Caco-2 (cell line): ENCODE measurements at regions of chr11 and their contacts with region 1.

Region 1: DNA sequence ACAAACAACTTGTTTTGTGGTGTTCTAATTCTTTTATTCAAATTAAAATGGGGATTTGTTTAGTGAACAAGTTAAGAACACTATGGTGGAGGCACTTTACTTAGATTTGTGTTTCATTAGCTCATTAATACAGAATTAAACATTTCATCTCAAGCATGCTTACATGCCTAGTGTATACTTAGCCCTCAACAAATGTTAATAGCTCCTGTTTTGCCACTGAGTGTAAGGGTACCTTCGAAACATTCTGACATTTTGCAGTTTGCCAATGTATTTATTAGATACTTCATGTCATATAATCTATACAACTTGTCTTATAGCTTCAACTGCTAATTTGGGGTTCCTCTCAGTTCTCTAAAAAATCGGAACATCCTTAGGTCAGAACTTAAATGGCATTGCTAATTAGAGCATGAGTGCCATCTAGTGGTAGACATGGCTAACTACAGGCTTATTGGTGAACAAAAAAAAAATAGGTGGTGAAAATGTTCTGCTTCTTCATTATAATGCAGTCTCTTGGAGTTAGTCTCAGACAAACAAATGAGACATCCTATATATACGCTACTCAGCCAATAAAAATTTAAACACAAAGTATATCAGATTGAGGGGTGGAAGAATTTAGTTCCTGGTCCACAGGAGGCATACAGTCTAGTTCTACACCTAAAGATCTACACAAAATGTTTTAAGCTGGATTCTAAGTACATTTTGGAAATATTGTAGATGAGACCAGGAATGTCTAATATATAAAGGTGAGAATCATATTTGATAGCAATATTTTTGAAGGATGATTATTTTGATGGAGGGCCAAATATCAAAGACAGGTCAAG is 4.9 kb upstream of the CNTN5 start:
- DNase-seq: peak in 1 of 2 experiments; percentile 55
- H3K4me3 ChIP-seq: no peak overlapping the region
- H3K4me3 Mint-ChIP-seq: no peak overlapping the region
- H3K27ac Mint-ChIP-seq: no peak overlapping the region
- H3K4me1 ChIP-seq: no peaks in the 10 kb centered on the region
- H3K4me1 Mint-ChIP-seq: no peaks in the 10 kb centered on the region
- H3K27me3 ChIP-seq: no peaks in the 10 kb centered on the region
- H3K27me3 Mint-ChIP-seq: peaks cover 11% of the 10 kb centered on the region
- CTCF ChIP-seq: peak; percentile 92 to 93

Region 2: GRCh38 chr11:97269527-97269926 is 1746.3 kb before region 1 on chr11:
- CTCF ChIA-PET with region 1: no interaction called
- POLR2A ChIA-PET with region 1: no interaction called
- intact Hi-C with region 1: loop called (anchors 10 kb)
- DNase-seq: peak in 1 of 2 experiments; percentile 59
- H3K4me3 ChIP-seq: no peak overlapping the region
- H3K4me3 Mint-ChIP-seq: no peak overlapping the region
- H3K27ac Mint-ChIP-seq: no peak overlapping the region
- H3K4me1 ChIP-seq: no peaks in the 10 kb centered on the region
- H3K4me1 Mint-ChIP-seq: no peaks in the 10 kb centered on the region
- H3K27me3 ChIP-seq: no peaks in the 10 kb centered on the region
- H3K27me3 Mint-ChIP-seq: peaks cover 2% of the 10 kb centered on the region
- CTCF ChIP-seq: peak; percentile 63 to 67

Region 3: DNA sequence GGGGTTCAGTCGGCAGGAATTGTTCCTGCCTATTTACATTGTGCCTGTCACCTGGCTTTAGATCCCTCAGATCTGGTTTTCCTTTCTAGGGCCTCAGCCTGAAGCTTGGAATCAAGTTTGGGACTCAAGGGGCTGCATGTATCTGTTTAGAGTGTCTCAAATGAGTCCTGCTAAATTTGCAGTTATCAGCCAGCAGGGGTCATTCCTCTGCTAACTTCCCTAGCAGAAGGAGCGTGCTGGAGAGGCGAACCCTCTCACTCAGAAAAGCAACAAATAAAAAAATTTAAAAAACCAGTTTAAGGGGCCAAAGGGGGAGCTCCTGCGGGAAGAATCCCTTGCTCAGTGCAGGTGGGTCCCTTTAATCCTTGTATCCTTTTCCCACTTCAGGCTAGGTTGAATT is 1405.8 kb before region 1 on chr11:
- CTCF ChIA-PET with region 1: no interaction called
- POLR2A ChIA-PET with region 1: no interaction called
- intact Hi-C with region 1: loop called (anchors 1 kb)
- DNase-seq: peak in 1 of 2 experiments; percentile 20
- H3K4me3 ChIP-seq: no peak overlapping the region
- H3K4me3 Mint-ChIP-seq: no peak overlapping the region
- H3K27ac Mint-ChIP-seq: no peak overlapping the region
- H3K4me1 ChIP-seq: no peaks in the 10 kb centered on the region
- H3K4me1 Mint-ChIP-seq: no peaks in the 10 kb centered on the region
- H3K27me3 ChIP-seq: no peaks in the 10 kb centered on the region
- H3K27me3 Mint-ChIP-seq: no peaks in the 10 kb centered on the region
- CTCF ChIP-seq: peak in 1 of 2 experiments; percentile 21

Region 4: DNA sequence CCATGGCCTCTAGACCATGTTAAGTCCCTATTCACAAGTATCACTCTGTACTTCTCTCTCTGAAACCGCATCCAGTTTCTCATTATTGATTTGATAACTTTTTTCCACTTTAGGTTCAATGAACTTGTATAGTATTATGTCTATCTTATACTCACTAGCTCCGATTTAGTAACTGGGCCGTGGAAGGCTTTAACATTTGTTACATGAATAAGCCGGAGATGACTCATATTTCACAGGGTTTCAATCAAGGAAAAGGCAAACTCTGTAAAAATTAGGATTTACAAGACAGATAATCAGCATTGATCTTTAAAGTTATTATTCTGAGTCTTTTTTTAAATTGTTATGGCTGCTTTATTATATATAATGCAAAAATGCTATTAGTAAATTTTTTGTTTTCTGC is 657.3 kb before region 1 on chr11:
- CTCF ChIA-PET with region 1: no interaction called
- POLR2A ChIA-PET with region 1: no interaction called
- intact Hi-C with region 1: loop called (anchors 10 kb)
- DNase-seq: no peak
- H3K4me3 ChIP-seq: no peak overlapping the region
- H3K4me3 Mint-ChIP-seq: no peak overlapping the region
- H3K27ac Mint-ChIP-seq: no peak overlapping the region
- H3K4me1 ChIP-seq: no peaks in the 10 kb centered on the region
- H3K4me1 Mint-ChIP-seq: no peaks in the 10 kb centered on the region
- H3K27me3 ChIP-seq: no peaks in the 10 kb centered on the region
- H3K27me3 Mint-ChIP-seq: no peaks in the 10 kb centered on the region
- CTCF ChIP-seq: no peak

Region 5: DNA sequence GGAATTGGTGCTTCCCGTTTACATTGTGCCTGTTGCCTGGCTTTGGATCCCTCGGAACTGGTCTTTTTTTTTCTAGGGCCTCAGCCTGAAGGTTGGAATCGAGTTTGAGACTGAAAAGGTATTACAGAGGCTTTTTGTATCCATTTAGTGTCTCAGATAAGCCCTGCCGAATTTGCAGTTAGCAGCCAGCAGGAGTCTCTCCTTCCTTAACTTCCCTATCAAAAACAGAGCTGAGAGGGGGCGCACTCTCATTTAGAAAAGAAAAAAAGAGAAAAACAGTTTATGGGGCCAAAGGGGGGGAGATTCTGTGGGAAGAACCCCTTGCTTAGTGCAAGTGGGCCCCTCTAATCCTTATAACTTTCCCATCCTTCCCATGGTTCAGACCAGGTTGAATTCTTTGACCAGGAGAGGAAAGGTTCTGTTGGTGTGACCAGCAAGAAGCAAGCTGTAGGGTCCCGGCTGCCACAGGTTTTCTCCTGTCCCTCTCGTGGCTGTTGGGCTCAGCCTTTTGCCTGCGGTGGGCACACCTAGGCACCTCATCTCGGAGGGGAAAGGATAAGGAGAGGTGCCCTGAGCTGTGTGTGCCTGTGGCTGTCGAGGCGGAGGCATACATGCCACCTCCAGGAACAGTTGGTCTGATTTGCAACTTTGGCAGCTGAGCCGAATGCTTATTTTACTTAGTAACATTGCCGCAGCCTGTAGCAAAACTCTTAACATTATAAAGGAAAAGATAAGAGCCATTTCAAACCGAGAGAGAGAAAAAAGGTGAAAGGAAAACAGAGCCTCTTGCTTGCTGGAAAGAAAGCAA is 560.1 kb before region 1 on chr11:
- CTCF ChIA-PET with region 1: interaction called, 11 read pairs
- POLR2A ChIA-PET with region 1: no interaction called
- intact Hi-C with region 1: loop called (anchors 1 kb)
- DNase-seq: peak in 1 of 2 experiments; percentile 31
- H3K4me3 ChIP-seq: no peak overlapping the region
- H3K4me3 Mint-ChIP-seq: no peak overlapping the region
- H3K27ac Mint-ChIP-seq: no peak overlapping the region
- H3K4me1 ChIP-seq: no peaks in the 10 kb centered on the region
- H3K4me1 Mint-ChIP-seq: no peaks in the 10 kb centered on the region
- H3K27me3 ChIP-seq: no peaks in the 10 kb centered on the region
- H3K27me3 Mint-ChIP-seq: peaks cover 5% of the 10 kb centered on the region
- CTCF ChIP-seq: peak; percentile 52 to 63

Region 6: DNA sequence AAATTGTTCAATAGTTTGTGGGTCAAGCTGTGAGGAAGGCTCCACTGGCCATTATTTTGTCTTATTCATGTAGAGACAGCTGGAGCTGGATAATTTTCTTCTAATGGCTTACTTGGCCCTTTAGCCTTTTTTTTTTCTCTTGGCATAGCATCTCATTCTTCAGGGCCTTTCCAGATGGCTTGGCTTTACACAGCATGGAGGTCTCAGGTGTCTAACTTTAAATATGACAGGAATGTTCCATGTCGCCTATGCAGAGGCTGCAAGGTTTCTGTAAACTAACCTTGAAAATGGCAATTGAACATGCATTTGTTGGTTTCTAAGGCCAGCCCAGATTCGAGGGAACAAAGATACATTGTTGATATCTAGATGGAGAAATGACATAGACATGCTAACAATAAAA is 243.0 kb before region 1 on chr11:
- CTCF ChIA-PET with region 1: no interaction called
- POLR2A ChIA-PET with region 1: no interaction called
- intact Hi-C with region 1: no loop called
- DNase-seq: no peak
- H3K4me3 ChIP-seq: no peak overlapping the region
- H3K4me3 Mint-ChIP-seq: no peak overlapping the region
- H3K27ac Mint-ChIP-seq: no peak overlapping the region
- H3K4me1 ChIP-seq: no peaks in the 10 kb centered on the region
- H3K4me1 Mint-ChIP-seq: no peaks in the 10 kb centered on the region
- H3K27me3 ChIP-seq: no peaks in the 10 kb centered on the region
- H3K27me3 Mint-ChIP-seq: no peaks in the 10 kb centered on the region
- CTCF ChIP-seq: no peak

Region 7: DNA sequence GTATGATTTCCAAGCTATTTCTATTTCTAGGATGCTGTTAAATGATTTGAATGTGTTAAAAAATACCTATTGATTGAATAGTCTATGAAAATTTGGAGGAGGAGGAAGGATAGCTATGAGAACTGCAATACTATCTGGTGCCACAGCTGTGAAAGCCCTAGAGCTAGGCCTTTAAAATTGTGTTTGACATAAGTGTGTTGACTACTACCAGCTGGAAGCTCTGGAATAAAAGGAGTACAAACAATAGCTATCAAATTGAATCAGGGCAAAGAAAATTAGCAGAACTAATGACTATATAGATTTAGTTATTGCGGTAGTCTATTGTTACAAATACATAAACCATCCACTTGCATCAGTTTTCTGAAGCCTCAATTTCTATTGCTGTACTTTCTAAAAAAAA is 119.9 kb before region 1 on chr11:
- CTCF ChIA-PET with region 1: no interaction called
- POLR2A ChIA-PET with region 1: no interaction called
- intact Hi-C with region 1: no loop called
- DNase-seq: no peak
- H3K4me3 ChIP-seq: no peak overlapping the region
- H3K4me3 Mint-ChIP-seq: no peak overlapping the region
- H3K27ac Mint-ChIP-seq: no peak overlapping the region
- H3K4me1 ChIP-seq: no peaks in the 10 kb centered on the region
- H3K4me1 Mint-ChIP-seq: no peaks in the 10 kb centered on the region
- H3K27me3 ChIP-seq: no peaks in the 10 kb centered on the region
- H3K27me3 Mint-ChIP-seq: no peaks in the 10 kb centered on the region
- CTCF ChIP-seq: no peak

Region 8: DNA sequence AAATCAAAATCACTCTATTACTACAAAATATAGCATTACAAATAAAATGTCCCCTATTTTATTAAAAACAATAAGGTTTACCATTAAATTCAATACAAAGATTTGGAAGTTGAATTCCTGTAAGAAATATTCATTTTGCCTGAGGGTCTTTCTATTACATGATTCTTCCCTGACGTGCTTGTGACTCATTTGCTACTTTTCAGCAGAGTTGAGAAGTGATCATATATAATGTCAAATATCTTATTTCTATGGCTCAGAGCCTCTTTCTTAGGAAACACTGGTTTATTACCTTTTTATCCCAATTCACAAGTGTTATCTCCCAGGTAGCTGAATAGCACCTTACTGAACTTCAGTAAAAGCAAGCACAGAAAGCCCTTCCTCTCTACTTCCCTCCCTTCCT is 60.3 kb before region 1 on chr11:
- CTCF ChIA-PET with region 1: interaction called, 11 read pairs
- POLR2A ChIA-PET with region 1: no interaction called
- intact Hi-C with region 1: no loop called
- DNase-seq: no peak
- H3K4me3 ChIP-seq: no peak overlapping the region
- H3K4me3 Mint-ChIP-seq: no peak overlapping the region
- H3K27ac Mint-ChIP-seq: no peak overlapping the region
- H3K4me1 ChIP-seq: no peaks in the 10 kb centered on the region
- H3K4me1 Mint-ChIP-seq: no peaks in the 10 kb centered on the region
- H3K27me3 ChIP-seq: no peaks in the 10 kb centered on the region
- H3K27me3 Mint-ChIP-seq: no peaks in the 10 kb centered on the region
- CTCF ChIP-seq: no peak

Region 9: GRCh38 chr11:98967005-98967404 is 48.8 kb before region 1 on chr11:
- CTCF ChIA-PET with region 1: no interaction called
- POLR2A ChIA-PET with region 1: no interaction called
- intact Hi-C with region 1: no loop called
- DNase-seq: no peak
- H3K4me3 ChIP-seq: no peak overlapping the region
- H3K4me3 Mint-ChIP-seq: no peak overlapping the region
- H3K27ac Mint-ChIP-seq: no peak overlapping the region
- H3K4me1 ChIP-seq: no peaks in the 10 kb centered on the region
- H3K4me1 Mint-ChIP-seq: no peaks in the 10 kb centered on the region
- H3K27me3 ChIP-seq: no peaks in the 10 kb centered on the region
- H3K27me3 Mint-ChIP-seq: no peaks in the 10 kb centered on the region
- CTCF ChIP-seq: no peak

Region 10: DNA sequence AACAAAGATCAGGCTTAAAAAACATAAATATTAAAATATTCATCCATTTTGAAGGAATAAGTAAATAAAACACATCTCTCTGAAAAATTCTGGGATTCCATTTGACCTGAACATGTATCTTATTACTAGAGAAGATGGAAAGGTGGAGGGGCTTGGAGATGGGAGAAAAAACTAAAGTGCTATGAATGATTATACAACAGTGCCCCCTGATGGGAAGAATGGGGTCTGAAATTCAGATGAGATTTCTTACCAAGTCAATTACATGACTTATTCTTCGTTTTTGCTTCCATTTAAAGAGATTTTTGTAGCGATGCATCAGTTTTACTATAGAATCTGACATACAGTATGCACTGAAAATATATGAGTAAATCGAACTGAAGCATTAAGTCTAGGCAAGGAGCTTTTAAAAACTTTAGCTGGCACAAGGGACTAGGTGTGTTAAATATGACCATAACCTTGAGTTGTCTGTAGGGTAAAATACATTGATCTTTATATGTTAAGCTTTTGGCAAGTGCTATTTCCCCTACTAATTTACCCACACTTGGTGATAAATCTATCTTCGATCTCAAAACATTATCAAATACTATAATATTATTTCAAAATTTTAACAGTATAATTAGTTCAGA is 723.7 kb after region 1 on chr11:
- CTCF ChIA-PET with region 1: no interaction called
- POLR2A ChIA-PET with region 1: no interaction called
- intact Hi-C with region 1: loop called (anchors 1 kb)
- DNase-seq: peak in 1 of 2 experiments; percentile 63
- H3K4me3 ChIP-seq: no peak overlapping the region
- H3K4me3 Mint-ChIP-seq: no peak overlapping the region
- H3K27ac Mint-ChIP-seq: no peak overlapping the region
- H3K4me1 ChIP-seq: no peaks in the 10 kb centered on the region
- H3K4me1 Mint-ChIP-seq: no peaks in the 10 kb centered on the region
- H3K27me3 ChIP-seq: no peaks in the 10 kb centered on the region
- H3K27me3 Mint-ChIP-seq: peaks cover 8% of the 10 kb centered on the region
- CTCF ChIP-seq: peak; percentile 77 to 85